A549 (cell line): ENCODE measurements at regions of chr11 and their contacts with region 1.

Region 1: GRCh38 chr11:32176223-32176934 is 85.5 kb downstream of the RCN1 start:
- DNase-seq: peak; percentile 65 to 83
- ATAC-seq: peak; percentile 83 to 87
- H3K4me3 ChIP-seq: no peak overlapping the region
- H3K27ac ChIP-seq: no peak overlapping the region
- H3K4me1 ChIP-seq: no peaks in the 10 kb centered on the region
- CTCF ChIP-seq: peak; percentile 94
- EP300 ChIP-seq: no peak
- POLR2A ChIP-seq: no peak
- RAD21 ChIP-seq: peak; percentile 93 to 94

Region 2: GRCh38 chr11:31240338-31240904 is 936.0 kb before region 1 on chr11:
- CTCF ChIA-PET with region 1: interaction called, 13 read pairs
- POLR2A ChIA-PET with region 1: no interaction called
- DNase-seq: peak; percentile 5 to 73
- ATAC-seq: peak; percentile 43 to 88; a peak in 4 of 6 replicates
- H3K4me3 ChIP-seq: no peak overlapping the region
- H3K27ac ChIP-seq: no peak overlapping the region
- H3K4me1 ChIP-seq: peaks cover 12% of the 10 kb centered on the region; the same call in 2 of the 3 replicates
- CTCF ChIP-seq: peak; percentile 79
- EP300 ChIP-seq: no peak
- POLR2A ChIP-seq: no peak
- RAD21 ChIP-seq: peak; percentile 71

Region 3: DNA sequence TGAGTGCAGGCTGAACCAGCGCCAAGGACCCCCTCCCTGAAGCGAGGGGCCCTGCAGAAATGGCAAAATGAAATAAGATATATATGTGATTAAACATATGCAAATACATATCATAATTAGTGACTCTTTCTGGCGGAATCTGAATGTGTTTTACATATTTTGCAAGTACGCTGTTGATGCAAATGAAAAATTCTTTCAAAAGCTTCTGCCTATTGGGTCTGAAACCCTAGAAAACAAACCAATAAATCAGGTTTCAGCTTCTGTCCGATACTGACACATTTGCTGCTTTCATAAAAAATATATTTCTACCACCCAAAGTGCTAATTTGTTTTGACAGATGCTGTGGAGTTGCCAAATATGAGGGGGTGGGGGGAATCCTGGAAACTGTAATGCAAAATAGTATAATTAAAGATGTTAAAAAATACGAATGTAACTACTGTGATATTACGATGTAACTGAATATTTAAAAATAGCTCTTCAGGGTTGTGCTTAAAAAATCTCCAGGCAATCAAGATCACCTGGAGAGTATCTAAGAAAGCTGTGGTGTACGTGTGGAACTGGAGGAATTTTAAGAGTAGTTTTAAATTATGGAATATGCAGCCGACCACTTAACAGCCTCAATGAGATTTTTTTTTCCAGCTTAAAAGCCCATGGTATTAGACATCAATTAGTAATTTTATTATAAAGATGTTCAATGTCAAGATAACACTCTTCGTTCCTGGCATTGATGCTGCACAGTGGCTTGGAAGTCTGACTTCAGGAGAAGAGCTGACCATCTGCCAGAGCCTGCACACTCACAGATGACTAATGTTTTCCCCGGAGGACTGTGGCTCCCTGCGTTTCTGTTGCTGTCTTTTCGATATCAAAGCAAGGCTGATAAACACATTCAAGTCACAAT is 207.7 kb before region 1 on chr11:
- CTCF ChIA-PET with region 1: no interaction called
- POLR2A ChIA-PET with region 1: no interaction called
- DNase-seq: no peak
- ATAC-seq: peak in 1 of 2 experiments; percentile 51; a peak in 1 of 6 replicates
- H3K4me3 ChIP-seq: no peak overlapping the region
- H3K27ac ChIP-seq: no peak overlapping the region
- H3K4me1 ChIP-seq: no peaks in the 10 kb centered on the region
- CTCF ChIP-seq: no peak
- EP300 ChIP-seq: no peak
- POLR2A ChIP-seq: no peak
- RAD21 ChIP-seq: no peak

Region 4: DNA sequence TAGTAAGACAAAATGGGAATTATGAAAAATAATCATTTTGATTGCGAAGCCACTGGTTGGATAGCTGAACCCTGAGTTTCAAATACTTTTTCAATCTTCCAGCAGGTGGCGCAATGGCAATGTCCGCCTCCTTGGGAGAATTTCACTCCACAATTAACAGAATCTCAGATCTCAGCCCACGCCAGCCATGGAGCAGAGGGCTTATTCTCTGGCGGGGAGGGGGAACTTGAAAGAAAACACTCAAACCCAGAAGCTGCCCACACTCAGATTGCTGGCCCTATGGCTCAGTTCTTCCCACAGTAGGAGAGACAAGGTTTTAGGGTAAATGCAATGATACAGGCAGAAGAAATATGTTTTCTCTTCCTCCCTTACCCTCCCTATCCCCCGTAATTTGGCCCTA is 124.2 kb before region 1 on chr11:
- CTCF ChIA-PET with region 1: interaction called, 416 read pairs
- POLR2A ChIA-PET with region 1: no interaction called
- DNase-seq: peak; percentile 38 to 51
- ATAC-seq: peak; percentile 73 to 85; a peak in 3 of 6 replicates
- H3K4me3 ChIP-seq: no peak overlapping the region
- H3K27ac ChIP-seq: no peak overlapping the region
- H3K4me1 ChIP-seq: no peaks in the 10 kb centered on the region
- CTCF ChIP-seq: peak; percentile 81
- EP300 ChIP-seq: no peak
- POLR2A ChIP-seq: no peak
- RAD21 ChIP-seq: peak; percentile 78 to 81

Region 5: GRCh38 chr11:32162351-32162750 is 14.0 kb before region 1 on chr11:
- CTCF ChIA-PET with region 1: interaction called, 75 read pairs
- POLR2A ChIA-PET with region 1: no interaction called
- DNase-seq: no peak
- ATAC-seq: no peak
- H3K4me3 ChIP-seq: no peak overlapping the region
- H3K27ac ChIP-seq: no peak overlapping the region
- H3K4me1 ChIP-seq: no peaks in the 10 kb centered on the region
- CTCF ChIP-seq: no peak
- EP300 ChIP-seq: no peak
- POLR2A ChIP-seq: no peak
- RAD21 ChIP-seq: no peak

Region 6: DNA sequence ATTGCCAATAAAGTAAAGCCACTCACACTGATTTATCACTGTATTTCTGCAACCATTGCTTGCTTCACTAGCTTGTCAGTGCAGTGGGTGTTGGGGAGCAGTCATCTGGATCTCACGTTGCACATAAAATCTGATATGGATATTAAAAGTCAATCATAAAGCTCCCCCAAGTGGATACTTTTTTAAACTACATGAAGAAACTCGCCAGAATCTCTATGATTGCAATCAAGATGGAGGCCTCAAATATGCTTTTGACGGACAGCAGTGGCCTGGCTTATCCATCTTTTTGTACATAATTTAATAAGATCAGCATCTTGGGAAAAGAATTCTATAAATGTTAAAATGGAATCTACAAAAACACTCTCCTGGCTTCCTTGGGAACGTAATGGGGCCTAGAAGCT is 121.2 kb after region 1 on chr11:
- CTCF ChIA-PET with region 1: interaction called, 45 read pairs
- POLR2A ChIA-PET with region 1: no interaction called
- DNase-seq: peak; percentile 44 to 57
- ATAC-seq: peak; percentile 81 to 84
- H3K4me3 ChIP-seq: no peak overlapping the region
- H3K27ac ChIP-seq: no peak overlapping the region
- H3K4me1 ChIP-seq: no peaks in the 10 kb centered on the region
- CTCF ChIP-seq: peak; percentile 66
- EP300 ChIP-seq: no peak
- POLR2A ChIP-seq: no peak
- RAD21 ChIP-seq: peak; percentile 52 to 74

Region 7: DNA sequence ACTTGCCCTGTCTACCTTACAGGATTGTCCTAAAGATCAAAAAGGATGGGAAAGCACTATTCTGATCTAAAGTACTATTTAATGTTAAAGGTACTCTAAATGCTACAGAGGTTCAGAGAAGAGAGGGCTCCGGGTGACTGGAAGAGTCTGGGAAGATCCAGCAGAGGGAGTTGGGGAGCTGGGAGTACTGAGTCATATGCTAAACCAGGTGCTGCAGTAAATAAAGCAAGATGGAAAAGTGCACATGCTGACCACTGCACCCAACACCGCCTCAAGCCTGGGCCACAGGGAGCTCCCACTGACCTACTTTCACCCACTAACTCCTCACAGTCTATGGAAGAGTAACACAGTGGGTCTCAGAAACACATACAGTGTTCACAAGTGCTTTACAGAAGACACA is 209.6 kb after region 1 on chr11:
- CTCF ChIA-PET with region 1: no interaction called
- POLR2A ChIA-PET with region 1: no interaction called
- DNase-seq: peak; percentile 44 to 61
- ATAC-seq: peak; percentile 92 to 95
- H3K4me3 ChIP-seq: no peak overlapping the region
- H3K27ac ChIP-seq: no peak overlapping the region
- H3K4me1 ChIP-seq: no peaks in the 10 kb centered on the region
- CTCF ChIP-seq: peak; percentile 53
- EP300 ChIP-seq: no peak
- POLR2A ChIP-seq: no peak
- RAD21 ChIP-seq: peak; percentile 52 to 53; a peak in 4 of 5 replicates